Lower lobe of right lung (tissue), 2 donors: ENCODE measurements at regions of chr1 and their contacts with region 1.

Region 1: GRCh38 chr1:184805667-184806295 is 51.1 kb upstream of the EDEM3 start:
- DNase-seq: peak; percentile 90
- ATAC-seq: peak; percentile 95 to 99
- H3K4me3 ChIP-seq: no peak overlapping the region
- H3K27ac ChIP-seq: no peak overlapping the region
- H3K4me1 ChIP-seq: peaks cover 9% of the 10 kb centered on the region
- H3K27me3 ChIP-seq: no peaks in the 10 kb centered on the region
- CTCF ChIP-seq: peak; percentile 96

Region 2: DNA sequence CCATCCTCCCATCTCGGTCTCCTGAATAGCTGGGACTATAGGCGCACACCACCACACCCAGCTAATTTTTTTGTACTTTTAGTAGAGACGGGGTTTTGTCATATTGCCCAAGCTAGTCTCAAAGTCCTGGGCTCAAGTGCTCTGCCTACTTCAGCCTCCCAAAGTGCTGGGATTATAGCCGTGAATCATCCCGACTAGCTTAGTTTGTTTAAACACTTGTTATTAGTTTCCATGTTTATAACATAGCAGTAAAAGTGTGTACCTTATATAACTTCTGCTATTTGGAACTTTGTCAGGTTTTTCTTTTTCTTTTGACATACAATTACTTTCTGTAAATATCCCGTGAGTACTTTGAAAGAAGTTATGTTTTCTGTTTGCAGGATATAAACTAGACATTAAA is 479.5 kb before region 1 on chr1:
- intact Hi-C with region 1: no loop called
- DNase-seq: no peak
- ATAC-seq: peak; percentile 56 to 77
- H3K4me3 ChIP-seq: no peak overlapping the region
- H3K27ac ChIP-seq: no peak overlapping the region
- H3K4me1 ChIP-seq: no peaks in the 10 kb centered on the region
- H3K27me3 ChIP-seq: no peaks in the 10 kb centered on the region
- CTCF ChIP-seq: no peak

Region 3: DNA sequence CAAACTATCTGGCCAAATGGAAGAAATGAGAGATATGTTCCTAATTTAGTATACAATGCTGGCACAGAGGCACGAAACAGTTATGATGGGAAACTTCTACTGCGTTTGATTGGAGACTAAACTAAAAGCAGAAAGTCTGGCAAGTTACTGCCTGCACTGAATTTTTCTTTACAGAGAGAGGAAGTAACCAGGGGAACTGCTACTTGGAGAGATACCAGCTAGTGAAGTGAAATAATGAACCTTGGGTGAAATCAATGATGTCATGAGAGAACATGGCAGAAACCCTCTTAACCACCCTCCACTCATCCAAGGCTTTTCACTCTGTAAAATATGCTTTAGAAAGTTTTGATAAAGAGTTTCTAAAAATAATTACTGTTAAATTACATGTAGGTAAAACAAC is 139.2 kb after region 1 on chr1:
- intact Hi-C with region 1: no loop called
- DNase-seq: no peak
- ATAC-seq: peak; percentile 69 to 75
- H3K4me3 ChIP-seq: no peak overlapping the region
- H3K27ac ChIP-seq: no peak overlapping the region
- H3K4me1 ChIP-seq: peaks cover 33% of the 10 kb centered on the region
- H3K27me3 ChIP-seq: no peaks in the 10 kb centered on the region
- CTCF ChIP-seq: no peak

Region 4: DNA sequence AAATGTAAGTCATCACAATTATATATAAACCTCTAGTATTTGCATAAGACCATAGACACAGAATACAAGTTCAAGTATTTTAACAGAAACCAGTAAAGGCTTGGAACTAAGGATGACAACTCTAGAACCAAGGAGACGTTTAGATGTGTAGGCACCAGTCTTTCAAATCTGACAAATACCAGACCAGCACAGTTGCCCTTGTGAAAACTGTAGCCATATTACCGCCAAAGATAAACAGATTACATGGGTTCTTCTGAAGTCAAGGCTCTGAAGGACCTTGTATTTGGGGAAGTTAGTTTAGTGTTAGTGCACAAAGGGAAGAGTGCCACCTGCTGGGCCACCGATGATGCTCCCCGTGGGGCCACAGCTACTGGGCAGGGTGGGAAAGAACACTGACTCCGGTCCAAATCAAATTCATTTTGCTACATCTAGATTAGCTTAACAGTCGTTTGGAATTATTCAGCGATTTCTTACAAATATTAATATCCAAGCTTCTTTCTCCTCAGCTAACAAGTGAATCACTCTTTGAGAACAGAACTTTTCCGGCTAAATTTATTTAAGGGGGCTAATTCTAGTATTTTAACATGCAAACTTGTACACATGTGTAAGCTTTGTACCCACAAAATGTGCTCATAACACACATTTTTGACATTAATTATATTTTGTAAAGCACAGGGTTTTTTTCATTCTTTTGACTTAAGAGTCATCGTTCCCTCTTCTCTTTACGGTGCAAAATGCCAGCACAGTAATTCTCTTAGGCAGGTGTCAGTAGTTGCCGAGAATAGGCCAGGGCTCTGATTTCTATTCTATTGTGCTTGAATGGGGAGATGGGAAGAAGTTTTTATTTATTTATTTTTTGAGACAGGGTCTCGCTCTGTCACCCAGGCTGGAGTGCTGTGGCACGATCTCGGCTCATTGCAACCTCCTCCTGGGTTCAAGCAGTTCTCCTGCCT is 176.5 kb after region 1 on chr1:
- intact Hi-C with region 1: loop called (anchors 5 kb)
- DNase-seq: peak; percentile 83
- ATAC-seq: peak; percentile 98 to 99
- H3K4me3 ChIP-seq: no peak overlapping the region
- H3K27ac ChIP-seq: no peak overlapping the region
- H3K4me1 ChIP-seq: no peaks in the 10 kb centered on the region
- H3K27me3 ChIP-seq: no peaks in the 10 kb centered on the region
- CTCF ChIP-seq: peak; percentile 92